ENCODE measurements at regions of chr5 and their contacts with region 1.

Region 1: GRCh38 chr5:77437194-77437593 is 54.9 kb downstream of the WDR41 start:
- DNase-seq: no peak
- H3K4me3 ChIP-seq: no peak overlapping the region
- H3K27ac ChIP-seq: no peak overlapping the region
- H3K4me1 ChIP-seq: no peaks in the 10 kb centered on the region
- H3K27me3 ChIP-seq: no peaks in the 10 kb centered on the region
- CTCF ChIP-seq: peak in 2 of 3 experiments; percentile 32 to 57

Region 2: GRCh38 chr5:77143998-77144836 is 293.0 kb before region 1 on chr5:
- intact Hi-C with region 1: loop called (anchors 1 kb)
- DNase-seq: peak in 1 of 2 donors; percentile 86
- H3K4me3 ChIP-seq: no peak overlapping the region
- H3K27ac ChIP-seq: peak overlapping the region; percentile 54 to 58
- H3K4me1 ChIP-seq: peaks cover 0 to 6% of the 10 kb centered on the region in 2 donors
- H3K27me3 ChIP-seq: no peaks in the 10 kb centered on the region
- CTCF ChIP-seq: peak; percentile 60 to 83 (median 82)